Heart left ventricle (tissue), 16 donors: ENCODE measurements at regions of chr10 and their contacts with region 1.

Region 1: DNA sequence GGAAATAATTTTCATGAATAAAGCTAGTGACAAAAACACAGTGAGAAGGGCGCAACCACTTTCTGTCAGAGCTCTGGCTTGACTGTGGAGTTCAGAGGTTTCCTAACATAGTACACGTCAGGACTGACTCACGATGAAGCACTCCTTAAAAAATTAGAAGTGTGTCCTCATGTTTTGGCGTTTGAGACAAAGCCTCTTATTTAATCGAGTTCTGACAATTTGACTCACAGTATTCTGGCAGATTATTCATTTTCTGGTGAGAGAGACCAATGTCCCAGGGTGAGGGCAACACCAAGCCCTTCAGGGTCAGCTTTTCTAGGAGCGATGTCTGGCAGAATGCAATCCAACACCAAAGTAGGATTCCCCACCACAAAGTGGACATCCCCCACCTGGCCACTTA is 108.7 kb downstream of the DIP2C start:
- DNase-seq: no peak
- ATAC-seq: peak in 3 of 4 donors; percentile 64 to 87 (median 75)
- H3K4me3 ChIP-seq: no peak overlapping the region
- H3K27ac ChIP-seq: peak overlapping the region in 2 of 12 donors; percentile 22 to 62
- H3K4me1 ChIP-seq: peaks cover 0 to 30% (median 12%) of the 10 kb centered on the region in 12 donors
- H3K27me3 ChIP-seq: no peaks in the 10 kb centered on the region
- CTCF ChIP-seq: no peak
- POLR2A ChIP-seq: no peak

Region 2: GRCh38 chr10:520406-520795 is 60.4 kb before region 1 on chr10:
- intact Hi-C with region 1: loop called in 1 of 10 experiments (anchors 5 kb)
- DNase-seq: no peak
- ATAC-seq: peak in 3 of 4 donors; percentile 29 to 47 (median 45)
- H3K4me3 ChIP-seq: no peak overlapping the region
- H3K27ac ChIP-seq: peak overlapping the region in 1 of 12 donors; percentile 35
- H3K4me1 ChIP-seq: peaks cover 0 to 22% (median 5%) of the 10 kb centered on the region in 12 donors
- H3K27me3 ChIP-seq: no peaks in the 10 kb centered on the region
- CTCF ChIP-seq: no peak
- POLR2A ChIP-seq: no peak

Region 3: DNA sequence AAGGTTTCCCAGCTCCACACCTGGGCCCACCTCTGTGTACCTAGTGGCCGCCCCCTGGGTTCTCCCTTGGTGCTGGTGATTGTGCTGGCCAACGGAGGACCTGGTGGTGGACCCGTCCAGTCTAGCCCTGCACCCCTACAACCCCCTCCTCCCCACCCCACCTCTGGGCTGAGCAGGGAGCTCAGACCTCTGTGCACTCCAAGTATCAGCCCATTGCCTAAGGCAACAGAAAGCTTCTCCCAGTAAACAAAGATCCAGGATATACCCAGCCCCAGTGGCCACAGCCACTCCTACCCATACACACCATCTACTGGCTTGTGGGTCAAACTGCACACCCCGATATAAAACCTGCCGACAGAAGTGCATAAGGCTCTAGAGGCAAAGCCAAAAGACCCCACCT is 213.7 kb after region 1 on chr10:
- intact Hi-C with region 1: loop called in 5 of 10 experiments (anchors 5 to 10 kb)
- DNase-seq: peak in 1 of 5 donors; percentile 19
- ATAC-seq: peak; percentile 29 to 86 (median 64)
- H3K4me3 ChIP-seq: no peak overlapping the region
- H3K27ac ChIP-seq: no peak overlapping the region
- H3K4me1 ChIP-seq: peaks cover 0 to 5% (median 0%) of the 10 kb centered on the region in 12 donors
- H3K27me3 ChIP-seq: no peaks in the 10 kb centered on the region
- CTCF ChIP-seq: peak in 9 of 12 donors; percentile 11 to 59 (median 33)
- POLR2A ChIP-seq: no peak